ENCODE measurements at regions of chr16 and their contacts with region 1.

Region 1: GRCh38 chr16:19907161-19907992 is 22.7 kb upstream of the GPRC5B start:
- DNase-seq: peak; percentile 79

Region 2: DNA sequence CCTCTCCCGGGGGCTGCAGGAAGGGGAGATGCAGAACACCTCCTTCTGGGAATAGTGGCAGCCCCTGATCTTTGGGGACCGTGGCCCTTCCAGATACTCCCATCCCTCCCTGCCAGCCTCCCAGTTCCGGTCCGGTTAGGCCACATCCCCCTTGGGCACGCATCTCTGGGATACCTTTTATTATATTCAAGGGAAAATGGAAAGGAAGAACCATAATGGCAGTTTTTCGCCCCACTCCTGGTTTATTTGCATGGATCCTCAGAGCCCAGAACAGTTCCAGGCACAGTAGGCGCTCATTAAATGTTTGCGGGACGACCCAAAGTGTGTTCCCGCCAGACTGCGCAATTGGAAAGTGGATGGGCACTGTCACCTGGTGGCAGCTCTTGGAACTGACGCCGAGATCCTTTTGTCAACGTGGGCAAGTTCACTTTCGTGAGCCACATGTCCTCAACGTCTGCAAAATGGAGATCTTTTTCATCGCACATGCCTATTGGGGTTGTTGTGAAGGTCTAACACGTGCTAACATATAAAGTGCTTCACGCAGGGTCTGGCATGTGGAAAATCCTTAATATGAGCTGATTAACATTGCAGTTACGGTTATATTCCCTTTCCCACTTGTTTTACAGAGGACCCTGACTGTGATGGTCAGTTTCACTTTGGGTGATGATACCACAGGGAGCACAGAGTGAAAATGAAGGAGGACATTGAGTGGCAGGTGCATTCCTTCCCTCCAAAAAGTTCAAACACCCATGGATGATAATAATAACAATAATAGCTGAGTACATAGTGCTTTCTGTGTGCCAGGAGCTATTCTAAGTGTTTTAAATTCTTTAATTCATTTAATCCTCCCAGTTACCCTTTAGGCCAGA is 21.1 kb before region 1 on chr16:
- CTCF ChIA-PET with region 1: no interaction called
- POLR2A ChIA-PET with region 1: no interaction called
- DNase-seq: peak; percentile 72

Region 3: GRCh38 chr16:19923396-19923795 is 16.0 kb after region 1 on chr16:
- CTCF ChIA-PET with region 1: no interaction called
- POLR2A ChIA-PET with region 1: no interaction called
- DNase-seq: no peak

Region 4: DNA sequence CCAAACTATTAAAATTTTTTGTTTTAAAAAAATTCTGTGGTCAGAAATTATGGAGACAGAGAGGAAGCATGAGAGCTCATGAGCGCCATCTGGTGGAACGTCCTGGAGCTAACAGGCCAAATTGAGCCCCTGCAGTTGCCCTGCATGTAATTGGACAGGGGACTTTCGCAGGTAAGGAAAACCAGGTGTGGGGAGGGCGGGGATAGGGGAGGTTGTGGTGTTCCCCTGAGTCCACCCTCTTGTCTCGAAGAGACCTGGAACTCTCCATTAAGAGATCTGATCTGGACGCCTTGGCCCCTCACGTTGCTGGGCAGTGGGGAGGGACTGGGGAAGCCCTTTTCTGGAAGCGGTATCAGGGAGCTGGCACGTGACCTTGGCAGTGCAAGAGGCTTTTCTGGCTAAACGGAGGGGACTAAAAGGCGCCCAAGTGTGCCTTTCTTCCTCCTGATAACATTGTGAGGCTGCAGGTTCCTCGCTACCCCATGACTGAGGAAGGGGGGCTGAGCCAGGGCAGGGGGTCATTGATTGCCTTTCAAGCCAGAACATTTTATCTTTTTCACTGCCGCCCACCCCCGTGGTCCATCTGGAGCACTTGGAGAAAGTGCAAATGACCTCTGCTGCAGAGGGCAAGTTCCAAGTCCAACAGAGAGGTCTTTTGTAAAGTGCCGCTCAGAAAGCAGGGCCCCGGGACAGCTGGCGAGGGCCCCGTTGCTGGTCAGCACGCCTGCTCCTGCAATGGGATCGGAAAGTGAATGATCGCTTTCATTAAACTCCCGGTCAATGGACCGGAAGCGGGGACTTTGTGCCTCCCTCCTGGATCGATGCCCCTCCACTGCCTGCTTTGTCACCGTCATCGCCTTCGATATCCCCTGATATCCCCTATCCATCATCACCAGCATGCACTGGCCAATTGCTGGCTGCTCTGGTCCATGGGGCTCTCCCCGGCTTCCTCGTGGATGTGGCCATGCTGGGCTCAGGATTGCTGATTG is 478.8 kb after region 1 on chr16:
- CTCF ChIA-PET with region 1: interaction called, 20 read pairs
- POLR2A ChIA-PET with region 1: no interaction called
- DNase-seq: peak; percentile 60